ENCODE measurements at regions of chr10 and their contacts with region 1.

Region 1: DNA sequence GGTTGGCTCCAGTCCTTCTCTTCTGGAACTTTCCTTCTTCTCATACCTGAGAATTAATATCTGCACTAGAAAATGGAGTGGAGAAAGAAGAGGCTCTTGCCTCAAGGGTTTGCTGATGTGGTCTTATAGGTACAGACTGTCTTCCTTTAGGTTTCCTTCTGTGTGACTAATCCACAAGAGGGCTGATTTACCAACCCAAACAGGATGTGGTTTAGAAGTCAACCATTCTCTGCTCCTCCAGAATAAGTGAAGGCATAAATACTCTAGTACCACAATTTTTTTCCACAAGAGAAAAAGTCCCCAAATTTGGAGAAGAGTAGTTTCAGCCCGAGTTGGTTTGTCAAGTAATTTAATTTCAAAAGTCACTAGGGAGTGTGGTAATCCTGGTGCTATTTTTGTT is 85.8 kb downstream of the NRP1 start:
- DNase-seq: peak; percentile 87
- H3K4me3 ChIP-seq: no peak overlapping the region
- H3K27ac ChIP-seq: peak overlapping the region; percentile 100
- H3K4me1 ChIP-seq: peaks cover 64% of the 10 kb centered on the region
- H3K27me3 ChIP-seq: no peaks in the 10 kb centered on the region
- CTCF ChIP-seq: no peak
- POLR2A ChIP-seq: peak; percentile 35

Region 2: GRCh38 chr10:32980558-32981468 is 267.8 kb before region 1 on chr10:
- CTCF ChIA-PET with region 1: no interaction called
- POLR2A ChIA-PET with region 1: no interaction called
- dilution Hi-C with region 1: no loop called
- intact Hi-C with region 1: loop called (anchors 5 kb)
- DNase-seq: peak; percentile 98
- H3K4me3 ChIP-seq: peak overlapping the region in 2 of 3 experiments; percentile 11 to 37
- H3K27ac ChIP-seq: peak overlapping the region; percentile 90
- H3K4me1 ChIP-seq: peaks cover 57% of the 10 kb centered on the region
- H3K27me3 ChIP-seq: no peaks in the 10 kb centered on the region
- CTCF ChIP-seq: no peak
- POLR2A ChIP-seq: peak; percentile 87

Region 3: GRCh38 chr10:33216661-33217427 is 31.8 kb before region 1 on chr10:
- CTCF ChIA-PET with region 1: no interaction called
- POLR2A ChIA-PET with region 1: interaction called, 3 read pairs
- dilution Hi-C with region 1: no loop called
- intact Hi-C with region 1: loop called (anchors 1 kb)
- DNase-seq: peak; percentile 60
- H3K4me3 ChIP-seq: no peak overlapping the region
- H3K27ac ChIP-seq: peak overlapping the region; percentile 94
- H3K4me1 ChIP-seq: peaks cover 48% of the 10 kb centered on the region
- H3K27me3 ChIP-seq: no peaks in the 10 kb centered on the region
- CTCF ChIP-seq: no peak
- POLR2A ChIP-seq: no peak

Region 4: DNA sequence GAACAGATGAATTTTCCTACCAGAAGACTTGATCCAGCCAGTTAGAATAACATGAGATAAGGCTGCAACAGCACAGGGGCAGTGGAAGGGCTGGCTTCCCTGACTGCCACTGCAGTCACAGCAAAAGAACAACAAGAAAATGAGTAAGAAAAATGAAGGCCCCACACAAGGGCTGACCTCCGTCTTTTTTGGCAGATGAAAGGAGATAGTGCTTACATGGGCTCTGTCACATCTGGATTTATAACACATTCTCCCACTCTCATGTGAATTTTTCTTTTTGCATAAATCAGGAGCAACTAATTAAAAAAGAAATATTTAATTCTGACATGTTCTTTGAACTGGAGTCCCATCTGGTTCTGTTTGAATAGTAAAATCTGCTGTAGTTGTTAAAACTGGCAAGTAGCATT is 13.8 kb before region 1 on chr10:
- CTCF ChIA-PET with region 1: interaction called, 20 read pairs
- POLR2A ChIA-PET with region 1: interaction called, 11 read pairs
- dilution Hi-C with region 1: no loop called
- intact Hi-C with region 1: loop called (anchors 1 kb)
- DNase-seq: peak; percentile 87
- H3K4me3 ChIP-seq: no peak overlapping the region
- H3K27ac ChIP-seq: peak overlapping the region; percentile 99
- H3K4me1 ChIP-seq: peaks cover 71% of the 10 kb centered on the region
- H3K27me3 ChIP-seq: no peaks in the 10 kb centered on the region
- CTCF ChIP-seq: no peak
- POLR2A ChIP-seq: no peak

Region 5: DNA sequence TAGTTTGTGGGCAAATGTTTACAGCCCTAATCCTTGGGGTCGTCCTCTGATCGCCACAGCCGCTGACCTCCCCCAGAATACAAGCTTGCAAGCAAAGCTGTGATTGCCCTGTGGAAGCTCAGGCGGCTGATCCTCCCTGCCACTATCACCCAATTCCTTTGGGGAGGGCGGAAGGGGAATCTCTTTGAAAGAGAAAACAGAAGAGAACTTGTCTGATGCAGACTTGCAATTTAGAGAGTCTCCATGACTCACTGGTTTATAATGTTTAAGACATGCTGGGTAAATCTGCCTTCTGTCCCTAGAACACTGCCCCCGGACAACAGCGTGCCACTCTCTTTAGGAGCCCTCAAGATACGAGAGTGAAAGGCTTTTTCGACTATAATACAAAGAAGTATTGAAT is 10.3 kb after region 1 on chr10:
- CTCF ChIA-PET with region 1: interaction called, 14 read pairs
- POLR2A ChIA-PET with region 1: interaction called, 5 read pairs
- dilution Hi-C with region 1: no loop called
- intact Hi-C with region 1: loop called (anchors 1 kb)
- DNase-seq: no peak
- H3K4me3 ChIP-seq: no peak overlapping the region
- H3K27ac ChIP-seq: no peak overlapping the region
- H3K4me1 ChIP-seq: peaks cover 48% of the 10 kb centered on the region
- H3K27me3 ChIP-seq: no peaks in the 10 kb centered on the region
- CTCF ChIP-seq: no peak
- POLR2A ChIP-seq: no peak

Region 6: GRCh38 chr10:33273295-33274002 is 24.8 kb after region 1 on chr10:
- CTCF ChIA-PET with region 1: interaction called, 18 read pairs
- POLR2A ChIA-PET with region 1: no interaction called
- dilution Hi-C with region 1: no loop called
- intact Hi-C with region 1: no loop called
- DNase-seq: peak; percentile 93
- H3K4me3 ChIP-seq: no peak overlapping the region
- H3K27ac ChIP-seq: peak overlapping the region; percentile 85
- H3K4me1 ChIP-seq: peaks cover 46% of the 10 kb centered on the region
- H3K27me3 ChIP-seq: no peaks in the 10 kb centered on the region
- CTCF ChIP-seq: peak in 1 of 2 donors; percentile 28
- POLR2A ChIP-seq: peak; percentile 51